Mammary epithelial cell (primary cell): ENCODE measurements at regions of chr2 and their contacts with region 1.

Region 1: GRCh38 chr2:233982421-233983121 is 65.4 kb downstream of the TRPM8 start:
- DNase-seq: peak; percentile 95
- H3K4me3 ChIP-seq: no peak overlapping the region
- H3K27ac ChIP-seq: peak overlapping the region; percentile 92
- H3K4me1 ChIP-seq: peaks cover 46% of the 10 kb centered on the region
- H3K27me3 ChIP-seq: no peaks in the 10 kb centered on the region
- CTCF ChIP-seq: no peak

Region 2: GRCh38 chr2:234125451-234126145 is 143.0 kb after region 1 on chr2:
- CTCF ChIA-PET with region 1: no interaction called
- dilution Hi-C with region 1: no loop called
- in situ Hi-C with region 1: loop called (anchors 10 kb)
- intact Hi-C with region 1: no loop called
- DNase-seq: no peak
- H3K4me3 ChIP-seq: no peak overlapping the region
- H3K27ac ChIP-seq: no peak overlapping the region
- H3K4me1 ChIP-seq: no peaks in the 10 kb centered on the region
- H3K27me3 ChIP-seq: no peaks in the 10 kb centered on the region
- CTCF ChIP-seq: no peak

Region 3: DNA sequence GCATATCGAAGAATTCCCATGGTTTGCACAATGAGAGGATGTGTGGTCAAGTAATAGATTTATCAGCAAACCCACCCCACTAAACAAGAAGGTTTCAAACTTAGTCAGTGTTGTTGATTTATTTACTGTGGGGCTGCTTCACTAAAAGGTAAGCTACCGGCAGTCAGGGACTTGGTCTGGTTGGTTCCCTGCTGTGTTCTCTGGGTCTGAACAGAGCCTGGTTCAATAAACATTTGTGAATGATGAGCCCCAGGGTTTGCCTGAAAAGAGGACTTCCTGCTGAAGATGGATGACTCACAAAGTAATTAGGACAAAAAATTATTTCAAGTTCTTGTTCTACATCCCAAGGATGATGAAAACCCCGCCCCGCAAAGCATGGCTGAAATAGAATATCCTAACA is 176.2 kb after region 1 on chr2:
- CTCF ChIA-PET with region 1: no interaction called
- dilution Hi-C with region 1: no loop called
- in situ Hi-C with region 1: no loop called
- intact Hi-C with region 1: no loop called
- DNase-seq: peak; percentile 47
- H3K4me3 ChIP-seq: no peak overlapping the region
- H3K27ac ChIP-seq: no peak overlapping the region
- H3K4me1 ChIP-seq: peaks cover 30% of the 10 kb centered on the region
- H3K27me3 ChIP-seq: no peaks in the 10 kb centered on the region
- CTCF ChIP-seq: no peak

Region 4: GRCh38 chr2:234269769-234270204 is 287.2 kb after region 1 on chr2:
- CTCF ChIA-PET with region 1: no interaction called
- dilution Hi-C with region 1: no loop called
- in situ Hi-C with region 1: loop called in 1 of 2 experiments (anchors 10 kb)
- intact Hi-C with region 1: no loop called
- DNase-seq: peak; percentile 20
- H3K4me3 ChIP-seq: no peak overlapping the region
- H3K27ac ChIP-seq: no peak overlapping the region
- H3K4me1 ChIP-seq: peaks cover 6% of the 10 kb centered on the region
- H3K27me3 ChIP-seq: no peaks in the 10 kb centered on the region
- CTCF ChIP-seq: no peak